AG04450 (cell line): ENCODE measurements at regions of chr2 and their contacts with region 1.

Region 1: GRCh38 chr2:9813312-9814133 is 29.8 kb upstream of the TAF1B start:
- DNase-seq: no peak
- H3K4me3 ChIP-seq: no peak overlapping the region
- H3K27ac ChIP-seq: no peak overlapping the region
- H3K27me3 ChIP-seq: peaks cover 4% of the 10 kb centered on the region
- CTCF ChIP-seq: peak; percentile 92

Region 2: DNA sequence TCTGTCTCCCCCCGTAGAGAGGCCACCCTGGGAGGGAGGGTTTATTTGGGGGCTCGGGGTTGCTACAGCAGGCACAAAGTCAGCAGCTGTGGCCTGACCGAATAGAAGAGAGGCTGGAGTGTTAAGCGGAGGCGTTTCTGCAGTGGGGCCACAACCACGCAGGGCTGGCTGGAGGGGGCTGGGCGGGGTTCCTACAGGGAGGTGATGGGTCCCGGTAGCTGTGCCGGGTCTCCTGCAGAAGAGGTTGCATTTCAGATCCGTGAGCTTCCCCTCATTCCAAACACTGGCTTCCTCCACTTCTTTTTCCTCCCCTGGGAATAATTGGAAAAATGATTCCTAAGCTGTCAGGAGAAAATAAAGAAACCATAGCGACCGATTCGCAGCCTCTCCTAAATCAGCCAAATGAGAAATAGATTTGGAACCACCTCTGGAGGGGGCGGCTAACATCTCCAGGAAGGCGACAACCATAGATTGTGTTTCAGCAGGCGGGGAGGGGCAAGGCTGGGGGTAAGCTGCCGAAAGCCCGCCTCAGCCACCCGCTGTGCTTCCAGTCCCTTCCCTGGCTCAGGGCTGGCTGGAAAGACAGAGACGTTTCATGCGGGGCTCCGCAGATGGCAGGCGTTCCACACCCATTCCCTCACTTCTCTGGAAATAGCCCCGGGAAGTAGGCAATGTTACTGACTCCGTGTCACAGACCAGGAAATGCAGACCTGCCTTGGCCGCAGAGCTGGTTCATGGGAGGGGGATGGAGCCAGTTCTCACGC is 55.8 kb before region 1 on chr2:
- CTCF ChIA-PET with region 1: no interaction called
- POLR2A ChIA-PET with region 1: no interaction called
- DNase-seq: no peak
- H3K4me3 ChIP-seq: peak overlapping the region; percentile 10; the same call in 1 of the 2 replicates
- H3K27ac ChIP-seq: no peak overlapping the region
- H3K27me3 ChIP-seq: no peaks in the 10 kb centered on the region
- CTCF ChIP-seq: no peak

Region 3: DNA sequence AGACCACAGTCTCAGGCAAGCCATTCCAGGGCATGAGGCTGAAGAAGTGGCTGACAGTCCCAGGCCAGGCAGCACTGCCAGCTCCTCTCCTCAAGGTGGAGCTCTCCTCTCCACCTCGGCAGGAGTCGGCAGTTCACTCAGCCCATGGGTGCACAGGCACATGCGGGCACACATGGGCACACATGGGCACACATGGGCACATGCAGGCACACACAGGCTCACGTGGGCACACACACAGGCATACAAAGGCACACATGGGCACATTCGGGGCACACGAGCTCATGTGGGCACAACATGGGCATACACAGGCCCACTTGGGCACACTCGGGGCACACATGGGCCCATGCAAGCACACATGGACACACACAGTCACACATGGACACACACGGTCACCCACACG is 35.5 kb before region 1 on chr2:
- CTCF ChIA-PET with region 1: no interaction called
- POLR2A ChIA-PET with region 1: no interaction called
- DNase-seq: no peak
- H3K4me3 ChIP-seq: no peak overlapping the region
- H3K27ac ChIP-seq: no peak overlapping the region
- H3K27me3 ChIP-seq: peaks cover 5% of the 10 kb centered on the region
- CTCF ChIP-seq: peak; percentile 32

Region 4: GRCh38 chr2:9799665-9800632 is 13.6 kb before region 1 on chr2:
- CTCF ChIA-PET with region 1: interaction called, 66 read pairs
- POLR2A ChIA-PET with region 1: interaction called, 3 read pairs
- DNase-seq: peak; percentile 44
- H3K4me3 ChIP-seq: no peak overlapping the region
- H3K27ac ChIP-seq: no peak overlapping the region
- H3K27me3 ChIP-seq: no peaks in the 10 kb centered on the region
- CTCF ChIP-seq: peak; percentile 99

Region 5: DNA sequence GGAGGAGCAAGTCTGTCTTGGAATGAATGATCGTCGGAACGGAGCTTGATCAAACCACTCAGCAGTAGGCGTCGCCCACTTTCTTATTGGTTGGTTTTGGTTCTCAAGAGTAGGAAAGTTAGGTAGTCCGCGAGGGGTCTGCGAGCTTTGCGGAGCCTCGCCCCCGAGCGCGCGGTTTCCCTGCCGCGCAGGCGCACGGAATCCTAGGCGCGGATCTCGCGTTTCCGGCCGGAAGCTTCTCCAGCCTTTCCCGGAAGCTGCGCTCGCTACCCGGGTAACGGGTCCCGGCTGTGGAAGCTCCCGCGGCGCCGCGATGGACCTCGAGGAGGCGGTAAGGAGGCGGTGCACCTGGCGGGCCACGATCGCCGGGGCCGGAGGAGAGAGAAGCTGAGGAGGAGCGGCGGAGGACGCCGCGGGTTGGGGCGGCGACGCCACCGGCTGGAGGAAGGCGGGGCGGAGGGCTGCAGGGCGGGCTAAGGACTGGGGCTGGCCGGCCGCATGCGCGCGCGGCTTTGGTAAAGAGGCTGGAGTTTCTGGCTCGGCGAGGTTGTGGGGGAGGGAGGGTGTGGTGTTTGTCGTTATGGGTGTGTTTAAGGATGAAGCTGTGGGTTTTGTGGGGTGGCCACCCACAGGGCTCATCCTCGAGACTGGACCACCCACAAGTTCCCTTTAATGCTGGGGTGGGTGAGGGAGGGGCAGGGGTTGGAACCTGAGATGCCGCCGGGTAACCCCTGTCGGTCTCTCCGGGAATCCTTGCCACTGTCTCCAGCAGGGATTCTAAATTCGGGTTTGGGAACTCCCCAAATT is 29.9 kb after region 1 on chr2 and contains the start of gene TAF1B:
- CTCF ChIA-PET with region 1: interaction called, 32 read pairs
- POLR2A ChIA-PET with region 1: interaction called, 7 read pairs
- DNase-seq: peak; percentile 75
- H3K4me3 ChIP-seq: peak within 1 kb of the TSS; percentile 78
- H3K27ac ChIP-seq: peak within 1 kb of the TSS; percentile 88
- H3K27me3 ChIP-seq: no peaks in the 10 kb centered on the region
- CTCF ChIP-seq: peak; percentile 28; the same call in 1 of the 2 replicates
- polyA plus RNA-seq, gene TAF1B: 17.2 and 25.8 TPM in 2 replicates

Region 6: DNA sequence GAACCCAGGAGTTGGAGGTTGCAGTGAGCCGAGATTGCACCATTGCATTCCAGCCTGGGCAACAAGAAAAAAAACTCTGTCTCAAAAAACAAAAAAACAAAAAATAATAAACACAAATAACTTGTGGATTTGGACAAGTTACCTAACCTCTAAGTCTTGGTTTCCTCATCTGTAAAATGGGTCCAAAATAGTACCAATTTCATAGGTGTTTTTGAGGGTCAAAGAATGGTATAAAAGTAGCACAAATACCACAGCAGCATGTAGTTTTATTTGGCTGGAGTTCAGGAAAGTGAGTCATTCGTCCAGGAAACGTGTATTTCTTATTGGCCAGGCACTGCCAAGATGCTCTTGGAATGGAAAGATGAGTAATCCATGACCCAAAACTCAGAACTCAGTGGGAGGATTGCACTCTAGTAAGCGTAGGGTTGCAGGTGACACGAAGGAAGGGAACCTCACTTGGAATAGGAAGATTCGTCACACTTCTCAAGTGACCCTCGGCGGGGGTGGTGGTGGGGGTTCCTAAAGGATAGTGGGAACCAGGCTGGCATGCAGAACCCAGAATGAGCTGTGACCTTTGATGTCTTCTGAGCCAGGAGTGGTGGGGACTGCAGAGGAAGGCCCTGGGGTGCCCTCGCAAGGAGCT is 162.4 kb after region 1 on chr2:
- CTCF ChIA-PET with region 1: interaction called, 19 read pairs
- POLR2A ChIA-PET with region 1: no interaction called
- DNase-seq: peak; percentile 85
- H3K4me3 ChIP-seq: no peak overlapping the region
- H3K27ac ChIP-seq: peak overlapping the region; percentile 40
- H3K27me3 ChIP-seq: no peaks in the 10 kb centered on the region
- CTCF ChIP-seq: no peak

Region 7: DNA sequence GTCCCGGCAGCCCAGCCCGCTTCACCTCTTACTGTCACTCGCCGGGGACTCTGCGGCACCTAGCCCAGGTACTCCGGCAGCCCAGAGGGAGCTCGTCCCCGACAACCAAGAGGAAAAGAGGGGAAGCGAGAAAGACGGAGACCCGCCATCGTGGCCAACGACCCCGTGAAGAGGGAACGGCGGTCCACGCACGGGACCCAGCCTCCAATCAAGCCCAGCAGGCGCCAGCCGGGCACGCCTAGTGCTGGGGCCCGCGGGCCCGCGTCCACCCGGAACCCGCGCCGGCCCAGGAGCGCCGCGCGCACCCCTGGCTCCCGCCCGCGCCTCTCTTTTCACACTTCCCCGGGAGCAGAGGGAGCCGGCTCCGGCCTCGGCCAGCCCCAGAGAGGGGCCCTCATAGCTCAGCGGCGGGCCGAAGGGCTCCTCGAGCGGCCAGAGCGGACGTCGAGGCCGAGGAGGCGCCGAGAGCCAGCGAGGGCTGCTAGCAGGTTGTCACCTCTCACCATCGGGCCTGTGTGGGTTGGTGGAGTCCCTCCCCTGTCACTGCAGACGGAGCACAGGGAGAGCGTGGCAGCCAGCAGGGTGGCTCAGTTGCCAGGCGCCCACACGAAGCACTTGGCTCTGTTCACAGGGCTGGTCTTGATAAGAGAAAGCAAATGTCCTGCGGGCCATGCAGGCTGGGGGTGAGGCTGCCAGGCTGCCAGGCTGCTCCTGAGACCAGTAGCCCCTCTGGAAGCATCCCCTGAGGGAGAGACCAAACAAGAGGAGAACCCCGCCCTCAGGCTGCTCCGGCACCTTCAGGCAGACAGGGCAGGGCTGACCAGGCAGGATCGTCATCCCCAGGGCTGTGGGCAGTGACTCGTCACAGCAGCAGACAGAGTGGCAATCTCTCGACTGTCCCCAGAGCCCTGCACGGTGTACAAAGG is 193.0 kb after region 1 on chr2:
- CTCF ChIA-PET with region 1: interaction called, 12 read pairs
- POLR2A ChIA-PET with region 1: no interaction called
- DNase-seq: no peak
- H3K4me3 ChIP-seq: no peak overlapping the region
- H3K27ac ChIP-seq: no peak overlapping the region
- H3K27me3 ChIP-seq: no peaks in the 10 kb centered on the region
- CTCF ChIP-seq: no peak

Region 8: GRCh38 chr2:10043906-10044601 is 230.5 kb after region 1 on chr2:
- CTCF ChIA-PET with region 1: interaction called, 118 read pairs
- POLR2A ChIA-PET with region 1: no interaction called
- DNase-seq: peak; percentile 66
- H3K4me3 ChIP-seq: peak overlapping the region; percentile 63
- H3K27ac ChIP-seq: no peak overlapping the region
- H3K27me3 ChIP-seq: peaks cover 5% of the 10 kb centered on the region
- CTCF ChIP-seq: no peak